ENCODE measurements at regions of chr7 and their contacts with region 1.

Region 1: DNA sequence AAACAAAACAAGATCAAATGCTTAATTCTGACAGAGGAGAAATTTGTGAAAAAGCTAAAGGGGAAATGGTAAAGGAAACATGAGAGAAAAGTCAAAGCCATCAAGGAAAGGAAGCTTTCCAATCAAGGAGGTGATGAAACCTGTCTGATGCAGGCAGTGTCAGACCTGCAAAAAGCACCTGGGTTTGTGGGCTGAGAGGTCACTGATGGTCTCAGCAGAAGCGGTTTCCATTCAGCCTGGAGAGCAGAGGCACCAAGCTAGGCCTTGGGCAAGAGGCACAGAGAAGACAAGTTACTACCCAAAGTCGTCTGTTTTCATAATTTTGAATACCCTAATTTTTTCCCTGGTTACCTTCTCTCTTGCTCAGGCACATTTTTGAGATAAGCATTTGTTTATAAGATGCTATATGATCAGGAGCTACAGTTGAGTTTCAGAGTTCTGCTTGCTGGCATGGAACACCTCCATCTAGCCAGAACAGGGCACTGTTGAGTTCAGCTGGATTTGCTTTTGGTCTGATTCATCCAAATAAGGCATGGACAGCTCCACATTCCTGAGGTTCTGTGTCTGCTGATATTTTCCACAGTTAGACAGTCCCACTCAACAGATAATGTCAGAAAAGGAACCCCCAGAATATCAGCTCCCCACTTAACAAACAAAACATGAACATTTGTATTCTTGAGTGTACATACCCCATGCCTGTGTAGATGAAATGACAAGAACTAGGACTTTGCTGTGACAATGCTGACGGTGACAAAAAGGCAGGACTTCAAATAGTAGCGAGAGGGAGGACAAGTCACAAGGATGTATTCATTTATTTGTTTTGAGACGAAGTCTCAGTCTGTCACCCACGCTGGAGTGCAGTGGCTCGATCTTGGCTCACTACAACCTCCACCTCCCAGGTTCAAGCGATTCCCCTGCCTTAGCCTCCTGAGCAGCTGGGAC is 4.9 kb upstream of the PPIA start:
- DNase-seq: no peak
- ATAC-seq: no peak
- H3K4me3 ChIP-seq: no peak overlapping the region
- H3K27ac ChIP-seq: no peak overlapping the region
- H3K4me1 ChIP-seq: no peaks in the 10 kb centered on the region
- H3K27me3 ChIP-seq: no peaks in the 10 kb centered on the region
- CTCF ChIP-seq: no peak

Region 2: GRCh38 chr7:44678471-44679179 is 112.9 kb before region 1 on chr7:
- intact Hi-C with region 1: no loop called
- DNase-seq: peak; percentile 44 to 72
- ATAC-seq: peak; percentile 52 to 60 (median 56)
- H3K4me3 ChIP-seq: no peak overlapping the region
- H3K27ac ChIP-seq: peak overlapping the region; percentile 74
- H3K4me1 ChIP-seq: peaks cover 24% of the 10 kb centered on the region
- H3K27me3 ChIP-seq: no peaks in the 10 kb centered on the region
- CTCF ChIP-seq: no peak

Region 3: GRCh38 chr7:44757311-44757710 is 34.2 kb before region 1 on chr7:
- intact Hi-C with region 1: loop called (anchors 5 kb)
- DNase-seq: peak in 1 of 2 donors; percentile 42
- ATAC-seq: no peak
- H3K4me3 ChIP-seq: no peak overlapping the region
- H3K27ac ChIP-seq: no peak overlapping the region
- H3K4me1 ChIP-seq: peaks cover 9% of the 10 kb centered on the region
- H3K27me3 ChIP-seq: no peaks in the 10 kb centered on the region
- CTCF ChIP-seq: no peak